Activated CD4-positive, alpha-beta T cell treated with anti-CD3 and anti-CD28 coated beads, Interleukin-2, amount 10 ng/mL, durations not matched to agents 24 days and 14 days (primary cell): ENCODE measurements at regions of chr17 and their contacts with region 1.

Region 1: GRCh38 chr17:41688699-41689496 is at the start of gene EIF1:
- DNase-seq: peak; percentile 100
- H3K4me3 Mint-ChIP-seq: peak within 1 kb of the TSS; percentile 97
- H3K27ac Mint-ChIP-seq: peak within 1 kb of the TSS; percentile 99
- H3K4me1 Mint-ChIP-seq: peaks cover 36% of the 10 kb centered on the region
- H3K27me3 Mint-ChIP-seq: no peaks in the 10 kb centered on the region
- total RNA-seq, gene EIF1: 837 and 858 TPM in 2 replicates

Region 2: DNA sequence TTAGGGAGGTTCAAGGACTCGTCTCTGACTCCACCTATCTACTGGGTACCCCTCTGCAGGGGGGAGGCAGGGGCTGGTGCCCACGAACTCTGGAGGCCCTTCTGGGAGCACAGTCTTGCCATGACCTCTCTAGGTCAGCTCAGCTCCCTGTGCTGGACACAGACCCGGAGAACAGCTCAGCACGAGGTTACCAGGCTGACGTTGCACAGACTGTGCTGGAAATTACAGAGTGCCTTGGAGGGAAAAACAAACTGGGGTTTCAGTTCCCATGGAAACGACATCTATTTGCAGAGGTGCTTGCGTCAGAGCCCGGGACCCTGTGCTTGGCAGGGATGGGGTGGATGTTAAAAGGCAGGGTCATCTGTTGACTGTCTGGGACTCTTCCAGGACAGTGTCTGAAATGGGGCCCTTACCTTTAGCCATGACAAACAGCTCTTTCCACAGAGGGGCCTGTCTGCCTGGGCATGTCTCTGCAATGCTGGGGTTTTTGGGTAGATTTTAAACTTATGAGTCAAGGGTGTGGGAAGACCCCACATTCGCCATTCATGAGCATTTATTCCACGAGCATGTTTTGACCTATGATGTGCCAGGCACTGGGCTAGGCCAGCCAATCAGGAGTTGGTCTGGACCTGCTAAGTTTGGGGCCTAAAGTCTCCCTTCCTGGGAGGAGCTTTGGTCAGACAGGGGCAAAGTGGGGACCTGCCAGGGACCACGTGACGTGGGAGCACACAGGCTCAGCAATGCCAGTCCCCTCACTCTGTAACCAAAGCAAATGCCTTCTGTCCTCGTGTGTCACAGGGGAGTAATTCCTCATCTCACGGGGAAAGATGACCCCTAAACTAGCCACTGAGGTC is 1146.1 kb before region 1 on chr17:
- intact Hi-C with region 1: loop called (anchors 5 kb)
- DNase-seq: peak; percentile 83
- H3K4me3 Mint-ChIP-seq: peak overlapping the region; percentile 66
- H3K27ac Mint-ChIP-seq: peak overlapping the region; percentile 92
- H3K4me1 Mint-ChIP-seq: peaks cover 80% of the 10 kb centered on the region
- H3K27me3 Mint-ChIP-seq: no peaks in the 10 kb centered on the region

Region 3: DNA sequence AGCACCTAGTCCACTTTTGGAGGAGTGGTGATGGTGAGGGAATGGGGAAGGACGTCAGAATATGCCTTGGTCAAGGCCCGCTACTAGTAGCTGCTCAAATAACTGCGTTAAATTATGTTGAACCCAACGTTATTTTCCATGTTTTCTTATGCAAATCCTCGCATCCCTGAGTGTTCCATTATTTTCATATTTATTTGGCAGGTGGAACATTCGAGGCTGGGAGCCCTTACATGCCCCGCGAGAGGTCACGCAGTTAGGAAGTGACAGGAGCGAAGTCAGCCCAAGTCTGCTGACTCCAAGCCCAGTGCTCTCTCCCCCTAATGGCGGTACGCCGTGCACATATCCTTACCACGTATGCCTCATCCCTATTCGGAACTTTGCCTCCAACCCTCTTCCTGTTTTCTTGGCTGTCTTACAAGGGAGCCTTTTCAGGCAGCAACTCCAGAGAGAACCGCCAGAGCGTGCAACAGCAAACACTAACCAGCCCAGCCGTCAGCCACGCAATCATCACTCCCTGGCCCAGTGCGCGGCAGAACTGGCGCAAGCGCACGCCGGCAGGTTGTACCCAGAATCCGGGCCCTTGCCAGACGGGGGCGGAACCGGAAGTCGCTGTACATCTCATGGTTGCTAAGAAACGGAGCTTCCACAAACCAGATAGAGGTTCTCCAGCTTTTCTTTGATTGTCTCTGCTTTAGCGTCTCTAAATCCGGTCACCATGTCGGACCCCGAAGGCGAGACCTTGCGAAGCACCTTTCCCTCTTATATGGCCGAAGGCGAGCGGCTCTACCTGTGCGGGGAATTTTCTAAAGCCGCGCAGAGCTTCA is 241.3 kb after region 1 on chr17 and contains the start of gene ODAD4:
- intact Hi-C with region 1: loop called (anchors 1 kb)
- DNase-seq: peak; percentile 99
- H3K4me3 Mint-ChIP-seq: peak within 1 kb of the TSS; percentile 95
- H3K27ac Mint-ChIP-seq: peak within 1 kb of the TSS; percentile 96
- H3K4me1 Mint-ChIP-seq: peaks cover 31% of the 10 kb centered on the region
- H3K27me3 Mint-ChIP-seq: no peaks in the 10 kb centered on the region
- total RNA-seq, gene ODAD4: 0.63 and 0.76 TPM in 2 replicates